Naive thymus-derived CD4-positive, alpha-beta T cell (primary cell): ENCODE measurements at regions of chr19 and their contacts with region 1.

Region 1: DNA sequence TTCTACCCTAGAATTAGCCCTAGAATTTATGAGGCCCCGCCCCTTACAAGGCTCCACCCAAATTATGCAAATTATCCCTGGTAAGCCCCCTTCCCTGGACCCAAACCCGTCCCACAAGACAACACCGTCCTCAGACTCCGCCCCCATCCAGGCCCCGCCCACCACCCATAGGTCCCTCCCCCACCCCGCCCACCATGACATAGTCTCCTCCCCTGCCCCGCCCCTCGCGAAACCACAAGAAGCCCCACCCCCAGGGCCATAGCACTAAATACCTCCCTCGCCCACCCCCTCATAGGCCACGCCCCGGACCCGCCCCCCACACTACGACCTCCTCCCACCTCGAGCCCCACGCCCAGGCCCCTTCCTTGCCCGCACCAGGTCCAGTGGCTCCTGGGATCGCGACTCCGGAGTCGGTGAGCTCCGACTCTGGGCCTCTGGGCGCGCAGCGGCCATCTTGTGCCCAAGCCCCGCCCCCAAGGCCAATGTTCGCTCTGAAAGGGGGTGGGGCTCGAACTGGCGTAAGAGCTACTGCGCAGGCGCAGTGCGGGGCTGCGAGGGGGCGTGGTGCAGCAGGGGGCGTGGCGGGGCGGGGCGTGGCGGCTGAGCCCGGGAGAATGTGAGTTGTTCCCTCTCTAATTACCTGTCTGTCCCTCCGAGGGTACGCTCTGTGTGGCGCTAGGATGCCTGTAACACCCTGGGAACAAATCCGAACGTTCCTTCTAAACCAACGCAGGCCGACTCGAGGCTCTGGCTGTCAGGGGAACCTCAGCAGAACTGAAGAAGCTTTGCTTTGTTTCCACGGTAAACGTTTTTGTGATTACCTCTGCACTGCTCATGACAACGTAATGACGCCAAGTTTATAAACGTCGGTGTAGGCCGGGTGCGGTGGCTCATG is at the start of gene ZNF784:
- DNase-seq: peak; percentile 89 to 99 (median 95)
- ATAC-seq: peak; percentile 90
- H3K4me3 ChIP-seq: peak within 1 kb of the TSS; percentile 76
- H3K4me3 Mint-ChIP-seq: peak within 1 kb of the TSS; percentile 78 to 96 (median 90)
- H3K27ac ChIP-seq: peak within 1 kb of the TSS; percentile 100
- H3K27ac Mint-ChIP-seq: peak within 1 kb of the TSS; percentile 89 to 99 (median 98)
- H3K4me1 ChIP-seq: peaks cover 27 to 46% of the 10 kb centered on the region in 2 donors
- H3K4me1 Mint-ChIP-seq: peaks cover 26 to 65% (median 58%) of the 10 kb centered on the region in 7 donors
- H3K27me3 ChIP-seq: no peaks in the 10 kb centered on the region
- H3K27me3 Mint-ChIP-seq: peaks cover 0 to 18% (median 0%) of the 10 kb centered on the region in 5 donors
- total RNA-seq, gene ZNF784: 5.1 to 17.1 (median 9.0) TPM

Region 2: DNA sequence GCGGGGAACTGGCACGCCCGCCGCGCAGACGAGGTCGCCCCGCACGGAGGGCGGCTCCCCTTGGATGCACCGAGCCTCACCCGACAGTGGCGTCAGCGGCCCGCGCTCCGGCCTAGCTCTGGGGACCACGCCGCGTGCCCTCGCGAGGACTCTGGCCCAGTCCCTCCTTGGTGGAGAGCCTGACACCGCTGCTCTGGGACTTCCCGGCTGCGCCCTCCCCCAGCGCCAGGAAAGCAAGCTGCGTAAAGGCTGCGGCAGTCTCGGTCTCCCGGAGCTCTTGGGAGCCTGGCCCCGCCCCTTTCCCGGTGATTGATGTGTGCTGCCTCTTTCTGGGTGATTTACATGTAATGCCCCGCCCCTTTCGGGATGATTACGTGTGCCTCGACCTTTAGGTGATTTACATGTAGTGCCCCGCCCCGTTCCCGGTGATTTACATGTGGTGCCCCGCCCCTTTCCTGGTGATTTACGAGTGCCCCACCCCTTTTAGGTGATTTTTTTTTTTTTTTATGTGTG is 1160.8 kb before region 1 on chr19 and contains the start of gene LENG9:
- CTCF ChIA-PET with region 1: no interaction called
- POLR2A ChIA-PET with region 1: no interaction called
- intact Hi-C with region 1: loop called in 1 of 2 experiments (anchors 10 kb)
- DNase-seq: peak; percentile 73 to 97 (median 87)
- ATAC-seq: peak; percentile 81
- H3K4me3 ChIP-seq: peak within 1 kb of the TSS; percentile 88
- H3K4me3 Mint-ChIP-seq: peak within 1 kb of the TSS; percentile 84 to 95 (median 92)
- H3K27ac ChIP-seq: peak within 1 kb of the TSS; percentile 71
- H3K27ac Mint-ChIP-seq: peak within 1 kb of the TSS; percentile 86 to 98 (median 93)
- H3K4me1 ChIP-seq: peaks cover 17 to 23% of the 10 kb centered on the region in 2 donors
- H3K4me1 Mint-ChIP-seq: peaks cover 16 to 35% (median 33%) of the 10 kb centered on the region in 7 donors
- H3K27me3 ChIP-seq: peaks cover 0 to 3% of the 10 kb centered on the region in 2 donors
- H3K27me3 Mint-ChIP-seq: peaks cover 5 to 23% (median 7%) of the 10 kb centered on the region in 5 donors
- total RNA-seq, gene LENG9: 3.5 to 6.1 (median 4.3) TPM

Region 3: DNA sequence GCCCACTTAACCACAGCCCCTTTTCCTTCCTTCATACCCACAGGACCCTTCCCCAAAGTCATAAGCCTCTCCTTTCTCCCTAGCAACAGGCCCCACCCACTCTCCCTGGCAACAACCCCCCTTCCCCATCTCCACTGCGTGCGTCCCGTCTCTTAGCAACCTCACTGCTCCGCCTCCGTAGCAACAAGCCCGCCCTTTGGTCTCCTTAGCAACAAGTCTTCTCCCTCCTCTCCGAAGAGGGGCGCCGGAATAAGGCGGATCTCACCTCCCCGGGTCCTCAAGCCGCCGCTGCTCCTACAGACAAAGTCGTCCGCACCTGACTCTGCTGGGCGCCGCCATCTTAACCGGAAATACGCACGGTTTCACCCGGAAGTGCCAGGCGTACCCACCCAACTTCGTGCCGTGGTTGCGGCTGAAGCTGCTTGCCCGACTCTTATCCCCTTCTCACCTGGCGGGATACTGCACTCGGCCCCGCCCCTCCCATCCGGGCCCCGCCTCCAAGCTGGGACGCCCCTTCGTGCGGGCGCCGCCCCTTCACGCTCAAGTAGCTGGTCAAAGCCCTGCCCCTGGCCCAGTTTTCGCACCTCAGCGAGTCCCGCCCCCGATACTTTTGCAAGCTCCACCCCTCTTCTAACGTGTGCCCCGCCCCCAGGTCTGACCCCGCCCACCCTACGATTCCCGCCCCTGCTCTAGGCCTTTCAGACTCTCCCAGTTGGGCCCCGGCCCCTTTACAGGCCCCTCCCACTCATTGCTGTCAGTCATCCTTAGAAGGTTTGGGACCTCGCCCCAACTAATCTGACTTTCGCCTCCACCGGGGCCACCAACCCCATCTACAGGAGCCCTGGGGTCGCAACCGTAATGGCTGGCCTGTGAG is 344.3 kb before region 1 on chr19 and contains the start of gene HSPBP1:
- CTCF ChIA-PET with region 1: no interaction called
- POLR2A ChIA-PET with region 1: no interaction called
- intact Hi-C with region 1: loop called in 1 of 2 experiments (anchors 1 kb)
- DNase-seq: peak; percentile 88 to 96 (median 96)
- ATAC-seq: peak; percentile 92
- H3K4me3 ChIP-seq: peak within 1 kb of the TSS; percentile 91
- H3K4me3 Mint-ChIP-seq: peak within 1 kb of the TSS; percentile 92 to 100 (median 98)
- H3K27ac ChIP-seq: peak within 1 kb of the TSS; percentile 89
- H3K27ac Mint-ChIP-seq: peak within 1 kb of the TSS; percentile 91 to 100 (median 98)
- H3K4me1 ChIP-seq: peaks cover 6 to 32% of the 10 kb centered on the region in 2 donors
- H3K4me1 Mint-ChIP-seq: peaks cover 12 to 52% (median 39%) of the 10 kb centered on the region in 7 donors
- H3K27me3 ChIP-seq: no peaks in the 10 kb centered on the region
- H3K27me3 Mint-ChIP-seq: peaks cover 0 to 9% (median 0%) of the 10 kb centered on the region in 5 donors
- total RNA-seq, gene HSPBP1: 15.0 to 30.0 (median 16.0) TPM

Region 4: DNA sequence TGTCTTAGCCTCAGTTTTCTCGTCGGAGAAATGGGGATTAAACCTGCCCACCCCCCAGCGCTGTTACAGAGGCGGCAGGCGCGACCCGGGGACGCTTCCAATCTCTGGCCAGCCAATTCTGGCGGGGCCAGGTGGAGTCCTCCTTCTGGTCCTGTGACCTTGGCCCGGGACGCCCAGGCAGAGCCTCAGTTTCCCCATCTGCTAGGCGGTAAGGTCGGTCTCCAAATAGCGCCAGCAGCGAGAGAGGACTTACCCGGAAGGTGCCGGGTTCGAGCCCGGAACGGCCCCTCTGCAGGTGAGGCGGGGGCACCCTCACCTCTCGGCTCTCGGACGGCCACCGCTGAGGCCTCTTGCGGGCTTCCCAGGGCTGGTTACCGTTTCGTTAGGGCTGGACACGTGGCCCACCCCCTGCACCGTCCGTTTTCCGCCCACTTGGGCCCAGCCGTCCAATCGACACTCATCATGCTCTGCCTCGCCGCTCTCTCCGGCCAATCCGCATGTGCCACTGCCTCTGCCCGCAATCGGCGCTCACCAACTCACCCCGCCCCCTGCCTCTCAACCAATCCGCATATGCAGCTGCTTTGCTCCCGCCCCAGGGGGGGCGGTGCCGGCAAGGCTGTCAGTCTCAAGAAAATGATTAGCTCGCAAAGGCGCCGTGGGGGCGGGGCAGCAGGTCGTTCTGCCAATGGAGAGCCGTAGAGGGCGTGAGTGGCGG is 162.9 kb before region 1 on chr19 and contains the start of gene ISOC2:
- CTCF ChIA-PET with region 1: no interaction called
- POLR2A ChIA-PET with region 1: interaction called, 5 read pairs
- intact Hi-C with region 1: loop called in 1 of 2 experiments (anchors 1 kb)
- DNase-seq: peak; percentile 99 to 100 (median 100)
- ATAC-seq: peak; percentile 98
- H3K4me3 ChIP-seq: peak within 1 kb of the TSS; percentile 91
- H3K4me3 Mint-ChIP-seq: peak within 1 kb of the TSS; percentile 86 to 99 (median 92)
- H3K27ac ChIP-seq: peak within 1 kb of the TSS; percentile 79
- H3K27ac Mint-ChIP-seq: peak within 1 kb of the TSS; percentile 68 to 94 (median 90)
- H3K4me1 ChIP-seq: peaks cover 4 to 12% of the 10 kb centered on the region in 2 donors
- H3K4me1 Mint-ChIP-seq: peaks cover 14 to 33% (median 20%) of the 10 kb centered on the region in 7 donors
- H3K27me3 ChIP-seq: no peaks in the 10 kb centered on the region
- H3K27me3 Mint-ChIP-seq: peaks cover 0 to 2% (median 0%) of the 10 kb centered on the region in 5 donors
- total RNA-seq, gene ISOC2: 5.1 to 20.1 (median 11.3) TPM

Region 5: DNA sequence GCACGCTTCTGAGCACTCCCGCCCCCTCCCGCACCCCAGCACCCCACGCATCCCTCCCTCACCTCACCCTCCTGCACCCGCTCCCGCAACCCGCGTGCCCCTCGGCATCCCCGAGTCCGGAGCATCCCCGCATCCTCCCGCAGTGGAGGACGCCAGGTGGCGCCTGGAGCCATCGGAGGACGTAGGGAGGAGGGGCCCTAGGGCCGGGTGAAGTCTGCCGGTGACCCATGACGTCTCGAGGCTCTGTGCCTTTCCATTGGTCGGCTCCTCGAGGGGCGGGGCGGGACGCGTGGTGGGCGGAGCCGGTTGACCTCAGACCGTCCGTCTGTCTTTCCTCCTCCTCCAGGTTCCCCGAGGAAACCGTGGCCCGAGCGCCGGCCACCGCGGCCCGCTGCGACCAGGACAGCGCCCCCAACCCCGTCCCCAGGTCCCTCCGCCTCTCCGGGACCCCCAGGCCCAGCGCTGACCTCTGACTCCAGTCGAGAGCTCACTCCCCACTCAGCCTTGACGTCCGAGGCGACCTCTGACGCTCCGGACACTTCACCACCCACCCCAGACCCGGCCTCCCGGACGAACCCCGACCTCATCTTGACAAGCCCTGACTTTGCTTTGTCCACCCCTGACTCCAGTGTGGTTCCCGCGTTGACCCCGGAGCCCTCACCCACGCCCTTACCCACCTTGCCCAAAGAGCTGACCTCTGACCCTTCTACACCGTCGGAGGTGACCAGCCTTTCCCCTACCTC is 107.3 kb before region 1 on chr19:
- CTCF ChIA-PET with region 1: interaction called, 74 read pairs
- POLR2A ChIA-PET with region 1: interaction called, 5 read pairs
- intact Hi-C with region 1: loop called (anchors 1 kb)
- DNase-seq: peak; percentile 77 to 94 (median 85)
- ATAC-seq: peak; percentile 100
- H3K4me3 ChIP-seq: peak overlapping the region; percentile 48
- H3K4me3 Mint-ChIP-seq: peak overlapping the region; percentile 74 to 89 (median 84)
- H3K27ac ChIP-seq: peak overlapping the region; percentile 66
- H3K27ac Mint-ChIP-seq: peak overlapping the region in 8 of 9 donors; percentile 55 to 96 (median 83)
- H3K4me1 ChIP-seq: peaks cover 3 to 4% of the 10 kb centered on the region in 2 donors
- H3K4me1 Mint-ChIP-seq: peaks cover 0 to 4% (median 4%) of the 10 kb centered on the region in 7 donors
- H3K27me3 ChIP-seq: no peaks in the 10 kb centered on the region
- H3K27me3 Mint-ChIP-seq: peaks cover 0 to 4% (median 3%) of the 10 kb centered on the region in 5 donors

Region 6: GRCh38 chr19:55586976-55587668 is 37.2 kb before region 1 on chr19:
- CTCF ChIA-PET with region 1: interaction called, 3 read pairs
- POLR2A ChIA-PET with region 1: interaction called, 9 read pairs
- intact Hi-C with region 1: loop called (anchors 1 kb)
- DNase-seq: peak; percentile 83 to 92 (median 89)
- ATAC-seq: peak; percentile 99
- H3K4me3 ChIP-seq: peak overlapping the region; percentile 63
- H3K4me3 Mint-ChIP-seq: peak overlapping the region; percentile 83 to 95 (median 88)
- H3K27ac ChIP-seq: peak overlapping the region; percentile 32
- H3K27ac Mint-ChIP-seq: peak overlapping the region; percentile 16 to 88 (median 86)
- H3K4me1 ChIP-seq: peaks cover 10 to 22% of the 10 kb centered on the region in 2 donors
- H3K4me1 Mint-ChIP-seq: peaks cover 8 to 41% (median 27%) of the 10 kb centered on the region in 7 donors
- H3K27me3 ChIP-seq: no peaks in the 10 kb centered on the region
- H3K27me3 Mint-ChIP-seq: peaks cover 0 to 32% (median 0%) of the 10 kb centered on the region in 5 donors

Region 7: DNA sequence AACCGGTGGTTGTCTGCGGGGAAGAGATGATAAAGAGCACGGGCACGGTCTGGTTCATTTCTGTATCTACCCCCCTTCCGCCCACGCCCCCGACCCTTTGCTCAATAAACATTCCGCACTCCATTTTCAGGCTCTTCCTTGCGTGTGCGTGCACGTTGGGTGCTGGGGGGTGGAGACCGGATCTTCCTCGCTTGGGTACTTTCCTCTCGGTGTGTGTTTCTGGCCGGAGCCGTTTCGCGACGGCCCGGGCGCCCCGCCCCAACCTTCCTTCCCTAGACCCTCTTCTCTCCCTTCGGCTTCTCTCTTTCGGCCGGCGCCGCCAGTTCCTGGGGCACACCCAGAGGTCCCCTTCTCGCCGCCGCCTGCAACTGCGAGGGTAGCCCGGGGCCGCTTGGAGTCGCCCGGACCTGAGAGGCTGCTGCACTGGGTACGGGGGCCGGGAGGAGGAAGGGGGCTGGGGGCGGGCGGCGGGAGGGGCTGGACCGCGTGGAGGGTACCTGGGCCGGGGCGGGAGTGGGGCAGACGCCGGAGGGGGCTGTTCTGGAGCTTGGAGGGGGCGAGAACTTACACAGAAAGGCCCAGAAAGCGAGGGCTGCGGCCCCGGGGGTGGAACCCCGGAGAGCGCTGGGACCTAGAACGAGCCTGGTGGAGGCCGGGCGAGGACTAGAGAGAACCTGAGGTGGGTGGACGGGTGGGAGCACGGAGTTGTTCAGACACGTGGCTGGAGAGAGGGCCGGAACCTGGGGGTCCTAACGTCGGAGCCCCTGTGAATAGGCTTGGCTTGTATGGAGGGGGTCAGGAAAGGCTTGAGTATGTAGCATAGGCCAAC is 19.2 kb after region 1 on chr19 and contains the start of gene ZNF581:
- CTCF ChIA-PET with region 1: interaction called, 6 read pairs
- POLR2A ChIA-PET with region 1: interaction called, 98 read pairs
- intact Hi-C with region 1: no loop called
- DNase-seq: peak; percentile 63 to 85 (median 81)
- ATAC-seq: peak; percentile 73
- H3K4me3 ChIP-seq: peak within 1 kb of the TSS; percentile 80
- H3K4me3 Mint-ChIP-seq: peak within 1 kb of the TSS; percentile 87 to 97 (median 94)
- H3K27ac ChIP-seq: peak within 1 kb of the TSS; percentile 80
- H3K27ac Mint-ChIP-seq: peak within 1 kb of the TSS; percentile 91 to 98 (median 96)
- H3K4me1 ChIP-seq: peaks cover 24 to 25% of the 10 kb centered on the region in 2 donors
- H3K4me1 Mint-ChIP-seq: peaks cover 23 to 63% (median 54%) of the 10 kb centered on the region in 7 donors
- H3K27me3 ChIP-seq: no peaks in the 10 kb centered on the region
- H3K27me3 Mint-ChIP-seq: no peaks in the 10 kb centered on the region
- total RNA-seq, gene ZNF581: 27.0 to 35.8 (median 32.1) TPM